ENCODE measurements at regions of chr22 and their contacts with region 1.

Region 1: DNA sequence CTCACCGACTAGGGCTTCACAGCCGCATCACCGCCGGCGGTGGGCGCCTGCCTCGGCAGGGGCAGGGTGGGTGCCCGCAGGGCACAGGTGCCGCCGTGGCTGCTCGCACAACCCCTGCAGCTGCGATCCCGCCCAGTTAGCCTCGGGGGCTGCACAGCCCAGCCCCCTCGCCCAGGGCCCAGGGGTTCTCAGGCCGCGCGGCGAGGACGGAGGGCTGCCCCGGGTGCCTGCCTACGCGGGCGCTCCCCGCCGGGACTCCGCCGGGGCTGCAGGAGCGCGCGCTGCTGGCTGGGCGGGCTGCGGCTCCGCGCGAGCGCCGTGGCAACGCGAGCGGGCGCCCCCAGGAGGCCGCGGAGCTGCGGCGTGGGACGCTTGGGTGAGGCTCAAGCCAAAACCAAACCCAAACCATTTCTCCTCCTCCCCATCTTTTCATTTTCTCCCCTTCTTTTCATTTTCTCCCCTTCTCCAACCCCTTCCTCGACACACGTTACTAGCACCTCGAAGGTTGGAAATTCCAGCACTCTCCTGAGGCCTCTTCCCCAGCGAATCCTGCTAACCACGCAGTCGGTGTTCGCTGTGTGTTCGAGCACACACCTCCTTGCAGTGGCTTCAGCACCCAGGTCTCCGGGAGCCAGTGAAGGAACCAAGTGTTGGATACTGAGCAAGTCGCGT is at the start of gene MICAL3:
- DNase-seq: peak; percentile 75
- ATAC-seq: peak; percentile 80
- total RNA-seq, gene MICAL3: 131 TPM

Region 2: DNA sequence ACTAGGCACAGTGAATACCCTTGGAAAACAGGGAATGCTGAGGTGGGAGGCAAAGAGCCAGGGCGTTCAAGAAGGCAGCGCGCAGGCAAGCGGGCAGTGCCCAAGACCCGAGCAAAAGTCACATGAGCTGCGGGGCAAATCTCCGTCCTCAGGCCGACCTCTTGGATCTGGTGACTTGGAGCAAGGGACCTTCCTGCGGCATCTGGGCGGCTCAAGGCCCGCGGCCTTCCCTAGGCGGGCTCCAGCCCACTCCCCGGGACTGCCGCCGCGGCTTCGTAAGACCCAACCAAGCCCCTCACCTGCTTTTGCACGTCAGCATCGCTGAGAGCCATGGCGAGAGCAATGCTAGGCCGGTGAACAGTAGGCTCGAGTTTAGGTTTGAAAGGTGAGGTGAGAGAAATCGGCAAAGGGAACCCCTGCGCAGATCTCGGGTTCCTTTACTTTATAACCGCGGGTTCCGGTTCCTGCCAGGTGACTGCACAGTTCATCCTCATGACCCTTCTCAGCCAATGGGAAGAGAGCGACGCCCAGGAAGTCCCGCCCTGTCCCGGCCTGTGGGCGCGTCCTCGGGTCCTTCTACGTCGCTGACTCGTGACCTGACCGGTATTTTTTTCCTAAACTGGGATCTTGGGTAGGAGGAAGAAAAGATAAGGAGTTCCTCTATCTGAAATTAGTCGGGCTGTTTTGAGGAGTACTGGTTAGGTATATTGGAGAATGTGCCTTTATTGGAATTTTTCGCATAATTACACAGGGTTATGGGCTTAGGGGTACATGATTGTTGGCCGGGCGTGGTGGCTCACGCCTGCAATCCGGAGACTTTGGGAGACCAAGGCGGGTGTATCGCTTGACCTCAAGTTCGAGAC is 395.9 kb before region 1 on chr22 and contains the start of gene ATP6V1E1:
- intact Hi-C with region 1: no loop called
- DNase-seq: peak; percentile 98
- ATAC-seq: peak; percentile 100
- total RNA-seq, gene ATP6V1E1: 102 TPM

Region 3: GRCh38 chr22:17754233-17754925 is 270.0 kb before region 1 on chr22:
- intact Hi-C with region 1: no loop called
- DNase-seq: no peak
- ATAC-seq: no peak

Region 4: GRCh38 chr22:17910561-17911311 is 113.7 kb before region 1 on chr22:
- intact Hi-C with region 1: loop called (anchors 10 kb)
- DNase-seq: peak; percentile 64
- ATAC-seq: peak; percentile 88